SK-N-SH (cell line): ENCODE measurements at regions of chr1 and their contacts with region 1.

Region 1: GRCh38 chr1:116574581-116575291 is 3.9 kb upstream of the CD58 start:
- DNase-seq: peak; percentile 81
- H3K4me3 ChIP-seq: peak overlapping the region in 1 of 2 experiments; percentile 39; a peak in 1 of 4 replicates
- H3K27ac ChIP-seq: peak overlapping the region in 1 of 2 experiments; percentile 43; a peak in 1 of 4 replicates
- H3K4me1 ChIP-seq: peaks cover 3 to 23% of the 10 kb centered on the region in 2 experiments; a peak in 2 of 4 replicates
- H3K27me3 ChIP-seq: no peaks in the 10 kb centered on the region
- CTCF ChIP-seq: peak; percentile 93
- EP300 ChIP-seq: no peak
- RAD21 ChIP-seq: peak; percentile 96

Region 2: DNA sequence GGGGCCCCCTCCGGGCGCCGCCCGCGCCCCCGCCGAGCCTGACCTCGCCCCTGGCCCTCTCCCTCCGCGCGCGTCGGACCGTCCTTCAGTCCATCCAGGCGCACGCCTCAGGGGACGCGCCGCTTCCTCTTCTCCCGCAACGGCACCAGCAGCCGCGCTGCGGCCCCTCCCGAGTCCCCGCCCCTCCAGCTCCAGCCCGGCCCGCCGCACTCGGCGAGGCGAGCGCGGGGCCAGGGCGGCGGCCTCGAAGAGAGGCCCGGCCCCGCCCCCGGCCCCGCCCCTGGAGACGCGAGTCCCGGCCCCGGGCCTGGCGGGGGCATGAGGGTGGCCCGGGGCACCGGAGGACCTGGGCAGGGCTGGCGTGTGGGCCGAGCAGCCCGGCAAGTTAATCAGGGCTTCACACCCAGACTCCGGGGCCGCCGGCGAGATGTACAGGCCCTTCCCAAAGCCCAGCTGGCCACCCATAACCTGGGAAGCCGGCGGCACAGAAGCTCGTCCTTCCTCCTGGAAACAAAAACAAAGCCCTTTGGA is 92.9 kb after region 1 on chr1 and contains the start of gene IGSF3:
- CTCF ChIA-PET with region 1: interaction called, 15 read pairs
- POLR2A ChIA-PET with region 1: interaction called, 3 read pairs
- DNase-seq: peak; percentile 96
- H3K4me3 ChIP-seq: peak within 1 kb of the TSS; percentile 66 to 73
- H3K27ac ChIP-seq: peak within 1 kb of the TSS in 1 of 2 experiments; percentile 84; a peak in 2 of 4 replicates
- H3K4me1 ChIP-seq: peaks cover 0 to 38% of the 10 kb centered on the region in 2 experiments; a peak in 2 of 4 replicates
- H3K27me3 ChIP-seq: peaks cover 17% of the 10 kb centered on the region
- CTCF ChIP-seq: no peak
- EP300 ChIP-seq: no peak
- RAD21 ChIP-seq: no peak
- polyA plus RNA-seq, gene IGSF3: 3.0 and 3.6 TPM in 2 replicates

Region 3: GRCh38 chr1:116679091-116679827 is 104.5 kb after region 1 on chr1:
- CTCF ChIA-PET with region 1: interaction called, 12 read pairs
- POLR2A ChIA-PET with region 1: no interaction called
- DNase-seq: peak; percentile 61
- H3K4me3 ChIP-seq: no peak overlapping the region
- H3K27ac ChIP-seq: peak overlapping the region in 1 of 2 experiments; percentile 77; a peak in 2 of 4 replicates
- H3K4me1 ChIP-seq: peaks cover 0 to 9% of the 10 kb centered on the region in 2 experiments; a peak in 1 of 4 replicates
- H3K27me3 ChIP-seq: no peaks in the 10 kb centered on the region
- CTCF ChIP-seq: no peak
- EP300 ChIP-seq: no peak
- RAD21 ChIP-seq: peak; percentile 36; the same call in 1 of the 2 replicates

Region 4: GRCh38 chr1:116737020-116737854 is 162.5 kb after region 1 on chr1:
- CTCF ChIA-PET with region 1: interaction called, 33 read pairs
- POLR2A ChIA-PET with region 1: no interaction called
- DNase-seq: peak; percentile 83
- H3K4me3 ChIP-seq: no peak overlapping the region
- H3K27ac ChIP-seq: no peak overlapping the region
- H3K4me1 ChIP-seq: peaks cover 0 to 10% of the 10 kb centered on the region in 2 experiments; a peak in 2 of 4 replicates
- H3K27me3 ChIP-seq: no peaks in the 10 kb centered on the region
- CTCF ChIP-seq: peak; percentile 78
- EP300 ChIP-seq: no peak
- RAD21 ChIP-seq: peak; percentile 94

Region 5: GRCh38 chr1:116878804-116879477 is 304.2 kb after region 1 on chr1:
- CTCF ChIA-PET with region 1: interaction called, 10 read pairs
- POLR2A ChIA-PET with region 1: no interaction called
- DNase-seq: peak; percentile 71
- H3K4me3 ChIP-seq: peak overlapping the region; percentile 41 to 56
- H3K27ac ChIP-seq: peak overlapping the region; percentile 80 to 99
- H3K4me1 ChIP-seq: peaks cover 14 to 22% of the 10 kb centered on the region in 2 experiments
- H3K27me3 ChIP-seq: no peaks in the 10 kb centered on the region
- CTCF ChIP-seq: no peak
- EP300 ChIP-seq: peak in 1 of 2 experiments; percentile 46; a peak in 1 of 4 replicates
- RAD21 ChIP-seq: peak; percentile 61

Region 6: DNA sequence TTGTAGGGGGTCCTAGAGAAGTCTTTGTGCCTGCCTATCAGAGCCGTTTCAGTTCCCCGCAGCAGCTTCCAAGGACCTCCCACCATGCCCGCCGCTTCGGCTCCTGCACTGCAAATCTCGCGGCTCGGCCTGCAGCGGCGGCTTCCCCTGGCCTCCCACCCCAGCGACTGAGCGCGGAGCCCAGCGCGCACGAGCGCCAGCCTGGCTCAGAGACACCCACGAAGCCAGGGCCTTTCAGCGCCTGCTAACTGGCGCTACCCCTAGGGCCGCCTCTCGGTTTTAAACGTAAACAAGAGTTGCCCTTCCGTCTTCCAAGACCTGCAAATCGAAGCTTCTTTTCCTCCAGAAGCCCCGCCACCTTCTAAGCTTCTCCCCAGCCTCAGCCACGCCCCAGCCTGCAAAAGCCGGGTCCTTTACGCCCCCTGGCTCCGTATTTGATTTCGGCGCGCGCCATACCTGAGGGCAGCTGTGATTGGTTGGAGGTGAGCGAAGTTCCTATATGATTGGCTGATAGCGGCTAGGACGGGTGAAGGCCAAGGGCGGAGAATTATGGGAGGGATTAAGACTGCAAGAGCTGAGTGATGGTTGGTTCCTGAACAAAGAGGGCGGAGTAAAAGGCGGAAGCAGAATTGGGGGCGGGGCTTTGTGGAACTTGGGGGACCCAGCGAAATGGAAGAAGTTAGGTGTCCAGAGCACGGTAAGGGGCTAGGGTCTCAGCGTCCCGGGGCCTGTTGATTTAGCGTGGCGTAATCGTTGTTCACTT is 485.1 kb after region 1 on chr1 and contains the start of gene TTF2:
- CTCF ChIA-PET with region 1: interaction called, 28 read pairs
- POLR2A ChIA-PET with region 1: no interaction called
- DNase-seq: peak; percentile 96
- H3K4me3 ChIP-seq: peak within 1 kb of the TSS; percentile 76 to 91
- H3K27ac ChIP-seq: peak within 1 kb of the TSS; percentile 53 to 83; a peak in 3 of 4 replicates
- H3K4me1 ChIP-seq: peaks cover 7 to 13% of the 10 kb centered on the region in 2 experiments; a peak in 3 of 4 replicates
- H3K27me3 ChIP-seq: no peaks in the 10 kb centered on the region
- CTCF ChIP-seq: no peak
- EP300 ChIP-seq: no peak
- RAD21 ChIP-seq: no peak
- polyA plus RNA-seq, gene TTF2: 10.8 and 12.2 TPM in 2 replicates